ENCODE measurements at regions of chr20 and their contacts with region 1.

Region 1: GRCh38 chr20:32779500-32780211 is 17.5 kb downstream of the DNMT3B start:
- DNase-seq: no peak

Region 2: GRCh38 chr20:32626859-32627636 is 152.6 kb before region 1 on chr20:
- intact Hi-C with region 1: no loop called
- DNase-seq: no peak

Region 3: DNA sequence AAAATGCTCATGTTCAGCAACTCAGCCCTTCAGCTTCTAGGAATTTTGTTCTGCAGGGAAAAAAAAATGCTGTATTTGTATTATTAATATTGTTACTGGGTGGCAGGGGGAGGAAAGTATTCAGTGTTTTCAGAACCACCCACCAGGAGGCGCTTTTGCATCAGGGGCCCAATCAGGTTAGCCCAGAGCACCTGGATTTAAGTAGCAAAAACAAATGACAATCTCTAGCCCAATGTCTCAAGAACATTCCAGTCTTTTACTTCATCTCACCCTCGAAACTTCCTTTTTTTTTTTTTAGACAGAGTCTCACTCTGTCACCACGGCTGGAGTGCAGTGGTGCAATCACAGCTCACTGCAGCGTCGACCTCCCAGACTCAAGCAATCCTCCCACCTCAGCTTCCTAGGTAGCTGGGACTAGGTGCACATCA is 105.3 kb before region 1 on chr20:
- intact Hi-C with region 1: loop called (anchors 2 kb)
- DNase-seq: no peak

Region 4: GRCh38 chr20:32718731-32719348 is 60.8 kb before region 1 on chr20:
- intact Hi-C with region 1: no loop called
- DNase-seq: no peak

Measured in cardiac septum (tissue), 1 donor.